ENCODE measurements at regions of chr2 and their contacts with region 1.

Region 1: GRCh38 chr2:63424329-63425078 is 163.8 kb downstream of the WDPCP start:
- DNase-seq: no peak
- H3K4me3 Mint-ChIP-seq: no peak overlapping the region
- H3K27ac Mint-ChIP-seq: no peak overlapping the region
- H3K4me1 Mint-ChIP-seq: peaks cover 2% of the 10 kb centered on the region
- H3K27me3 Mint-ChIP-seq: no peaks in the 10 kb centered on the region

Region 2: DNA sequence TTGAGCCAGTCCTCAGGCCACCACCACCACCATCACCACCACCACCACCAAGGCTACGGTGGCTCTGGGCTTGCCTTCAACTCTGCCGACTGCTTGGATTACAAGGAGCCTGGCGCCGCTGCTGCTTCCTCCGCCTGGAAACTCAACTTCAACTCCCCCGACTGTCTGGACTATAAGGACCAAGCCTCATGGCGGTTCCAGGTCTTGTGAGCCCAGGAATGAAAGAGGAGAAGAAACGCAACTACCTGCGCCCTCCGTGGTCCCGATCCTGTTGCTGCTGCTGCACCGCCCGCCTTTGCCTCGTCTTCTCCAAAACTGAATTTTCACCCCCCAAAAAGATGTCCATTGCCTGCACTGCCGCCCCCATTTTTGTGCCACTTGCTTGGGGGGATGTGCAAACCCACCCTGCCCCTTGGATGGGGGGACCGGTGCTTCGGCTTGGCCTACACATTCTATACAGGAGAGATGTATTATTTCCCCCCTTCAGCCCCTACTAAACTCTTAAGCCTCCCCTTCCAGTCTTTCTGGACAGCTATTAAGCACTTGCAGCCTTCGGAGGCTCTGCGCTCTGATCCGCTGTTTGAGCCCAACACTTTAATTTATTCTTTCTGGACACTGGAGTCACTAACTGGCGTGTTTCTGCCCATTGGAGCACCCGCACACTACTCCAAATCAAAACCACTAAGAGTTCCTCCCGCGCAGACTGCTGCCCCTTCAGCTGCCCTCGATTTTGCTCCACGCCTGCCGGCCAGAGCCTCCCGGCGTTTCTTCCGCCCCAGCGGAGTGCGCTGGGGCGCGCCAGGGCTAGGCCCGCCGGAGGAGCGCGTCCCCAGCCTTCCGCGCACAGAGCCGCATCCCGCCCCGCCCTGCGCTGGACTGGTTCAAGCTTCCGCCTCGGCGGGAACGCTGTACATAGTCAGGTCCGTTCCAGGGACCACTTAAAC is 368.1 kb before region 1 on chr2:
- CTCF ChIA-PET with region 1: interaction called, 4 read pairs
- intact Hi-C with region 1: loop called (anchors 5 kb)
- DNase-seq: peak; percentile 37
- H3K4me3 Mint-ChIP-seq: peak overlapping the region; percentile 30
- H3K27ac Mint-ChIP-seq: no peak overlapping the region
- H3K4me1 Mint-ChIP-seq: peaks cover 66% of the 10 kb centered on the region
- H3K27me3 Mint-ChIP-seq: peaks cover 79% of the 10 kb centered on the region

Region 3: DNA sequence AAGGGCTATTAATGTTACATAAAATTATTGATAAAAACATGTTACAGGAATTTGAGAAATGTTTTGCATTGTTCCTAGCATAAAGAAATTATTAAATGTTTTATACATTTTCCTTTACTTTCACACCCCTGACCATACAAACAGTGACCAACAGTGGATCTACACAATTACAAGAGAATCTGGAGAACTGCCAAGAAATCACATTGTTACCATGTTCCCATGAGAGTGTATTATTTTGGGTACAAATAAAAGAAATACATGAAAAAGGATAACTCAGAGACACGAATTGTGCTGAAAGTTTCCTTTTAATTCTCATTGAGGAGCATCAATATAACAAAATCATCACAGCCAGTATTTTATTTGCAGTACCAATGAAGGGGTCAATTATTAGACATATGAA is 13.7 kb after region 1 on chr2:
- CTCF ChIA-PET with region 1: interaction called, 18 read pairs
- intact Hi-C with region 1: no loop called
- DNase-seq: no peak
- H3K4me3 Mint-ChIP-seq: no peak overlapping the region
- H3K27ac Mint-ChIP-seq: no peak overlapping the region
- H3K4me1 Mint-ChIP-seq: peaks cover 6% of the 10 kb centered on the region
- H3K27me3 Mint-ChIP-seq: no peaks in the 10 kb centered on the region